PC-9 (cell line): ENCODE measurements at regions of chr7 and their contacts with region 1.

Region 1: DNA sequence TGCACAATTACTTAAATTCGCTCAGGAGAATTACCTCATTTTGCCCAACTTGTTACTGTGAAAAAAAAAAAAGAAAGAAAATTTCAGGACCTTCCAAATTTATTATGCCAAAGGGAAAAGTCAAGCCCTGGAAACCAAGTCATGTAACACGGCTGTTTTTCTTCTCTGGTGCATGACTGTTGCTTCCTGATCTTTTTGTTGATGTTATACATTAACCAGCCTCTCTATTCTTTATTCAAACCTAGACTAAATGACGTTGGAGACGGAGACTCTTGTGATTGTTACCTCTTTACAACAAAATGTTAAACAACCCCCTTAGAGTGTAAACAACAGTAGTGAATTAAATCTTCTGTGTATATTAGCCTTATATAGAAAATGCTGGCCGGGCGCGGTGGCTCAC is 16.1 kb upstream of the ZC3HAV1 start:
- DNase-seq: no peak
- H3K4me3 ChIP-seq: no peak overlapping the region
- H3K27ac ChIP-seq: no peak overlapping the region
- H3K4me1 ChIP-seq: no peaks in the 10 kb centered on the region
- H3K27me3 ChIP-seq: peaks cover 10% of the 10 kb centered on the region; the same call in 1 of the 2 replicates
- CTCF ChIP-seq: no peak

Region 2: DNA sequence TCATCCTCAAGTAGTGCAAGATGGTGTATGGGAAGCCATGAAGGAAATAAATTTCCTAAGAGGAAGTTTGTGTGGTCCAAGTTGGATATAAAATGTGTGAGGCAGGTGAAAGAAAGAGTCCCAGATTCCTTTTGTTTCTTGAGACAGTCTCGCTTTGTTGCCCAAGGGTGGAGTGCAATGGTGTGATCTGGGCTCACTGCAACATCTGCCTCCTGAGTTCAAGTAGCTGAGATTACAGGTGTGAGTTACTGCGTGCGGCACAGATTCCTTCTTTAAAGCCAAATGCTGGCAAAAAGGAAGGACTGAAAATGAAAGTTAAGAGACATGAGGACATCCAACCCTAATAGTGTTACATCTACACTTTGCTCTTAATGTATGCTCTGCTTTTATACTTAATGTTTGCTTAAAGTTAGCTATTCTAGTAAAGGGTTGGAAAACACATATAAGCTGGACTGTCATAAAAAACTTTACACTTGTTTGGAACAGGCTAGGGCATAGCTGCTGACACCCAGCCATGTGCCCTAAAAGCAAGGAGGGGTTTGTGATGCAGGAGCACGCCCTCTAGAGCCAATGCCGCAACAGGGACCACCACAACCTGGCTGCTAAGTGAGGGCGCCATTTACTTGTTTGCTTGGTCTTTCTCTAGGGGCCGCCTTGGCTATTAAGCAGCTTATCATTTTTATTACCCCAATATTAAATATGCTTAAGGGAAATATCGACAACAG is 432.4 kb after region 1 on chr7:
- CTCF ChIA-PET with region 1: interaction called, 10 read pairs
- POLR2A ChIA-PET with region 1: no interaction called
- intact Hi-C with region 1: no loop called
- DNase-seq: no peak
- H3K4me3 ChIP-seq: no peak overlapping the region
- H3K27ac ChIP-seq: no peak overlapping the region
- H3K4me1 ChIP-seq: no peaks in the 10 kb centered on the region
- H3K27me3 ChIP-seq: no peaks in the 10 kb centered on the region
- CTCF ChIP-seq: no peak